ENCODE measurements at regions of chr17 and their contacts with region 1.

Region 1: GRCh38 chr17:43994272-43995149 is 9.9 kb upstream of the NAGS start:
- DNase-seq: peak; percentile 55
- H3K4me3 Mint-ChIP-seq: no peak overlapping the region
- H3K27ac Mint-ChIP-seq: no peak overlapping the region
- H3K4me1 Mint-ChIP-seq: no peaks in the 10 kb centered on the region
- H3K27me3 Mint-ChIP-seq: peaks cover 28% of the 10 kb centered on the region

Region 2: GRCh38 chr17:43713494-43714162 is 280.9 kb before region 1 on chr17:
- intact Hi-C with region 1: no loop called
- DNase-seq: peak; percentile 9
- H3K4me3 Mint-ChIP-seq: peak overlapping the region; percentile 76
- H3K27ac Mint-ChIP-seq: no peak overlapping the region
- H3K4me1 Mint-ChIP-seq: peaks cover 18% of the 10 kb centered on the region
- H3K27me3 Mint-ChIP-seq: peaks cover 38% of the 10 kb centered on the region

Region 3: GRCh38 chr17:43878260-43879175 is 116.0 kb before region 1 on chr17:
- intact Hi-C with region 1: loop called (anchors 1 kb)
- DNase-seq: peak; percentile 49
- H3K4me3 Mint-ChIP-seq: no peak overlapping the region
- H3K27ac Mint-ChIP-seq: no peak overlapping the region
- H3K4me1 Mint-ChIP-seq: no peaks in the 10 kb centered on the region
- H3K27me3 Mint-ChIP-seq: peaks cover 2% of the 10 kb centered on the region

Region 4: GRCh38 chr17:43907998-43908721 is 86.4 kb before region 1 on chr17:
- intact Hi-C with region 1: loop called (anchors 1 kb)
- DNase-seq: peak; percentile 15
- H3K4me3 Mint-ChIP-seq: no peak overlapping the region
- H3K27ac Mint-ChIP-seq: no peak overlapping the region
- H3K4me1 Mint-ChIP-seq: peaks cover 4% of the 10 kb centered on the region
- H3K27me3 Mint-ChIP-seq: peaks cover 49% of the 10 kb centered on the region

Region 5: GRCh38 chr17:43940630-43941029 is 53.9 kb before region 1 on chr17:
- intact Hi-C with region 1: loop called (anchors 1 kb)
- DNase-seq: peak; percentile 4
- H3K4me3 Mint-ChIP-seq: no peak overlapping the region
- H3K27ac Mint-ChIP-seq: no peak overlapping the region
- H3K4me1 Mint-ChIP-seq: peaks cover 12% of the 10 kb centered on the region
- H3K27me3 Mint-ChIP-seq: peaks cover 17% of the 10 kb centered on the region

Measured in activated T-helper 1 cell treated with anti-CD3 and anti-CD28 coated beads, Interleukin-12 subunit alpha, Interleukin-12 subunit beta, Interleukin-2, Interleukin-4 antibody, amounts not matched to agents 30 ng/mL and 10 ng/mL and 1 ng/mL, durations not matched to agents 14 hours and 24 hours and 36 hours (primary cell).